Left ventricle myocardium inferior (tissue), 1 donor: ENCODE measurements at regions of chr4 and their contacts with region 1.

Region 1: GRCh38 chr4:177250056-177250696 is 59.5 kb upstream of the NEIL3 start:
- DNase-seq: peak; percentile 44
- H3K4me3 ChIP-seq: no peak overlapping the region
- H3K27ac ChIP-seq: no peak overlapping the region
- H3K4me1 ChIP-seq: no peaks in the 10 kb centered on the region
- H3K27me3 ChIP-seq: peaks cover 7% of the 10 kb centered on the region
- CTCF ChIP-seq: peak; percentile 88

Region 2: GRCh38 chr4:177315767-177316464 is 65.7 kb after region 1 on chr4:
- intact Hi-C with region 1: no loop called
- DNase-seq: no peak
- H3K4me3 ChIP-seq: no peak overlapping the region
- H3K27ac ChIP-seq: no peak overlapping the region
- H3K4me1 ChIP-seq: no peaks in the 10 kb centered on the region
- H3K27me3 ChIP-seq: no peaks in the 10 kb centered on the region
- CTCF ChIP-seq: no peak

Region 3: DNA sequence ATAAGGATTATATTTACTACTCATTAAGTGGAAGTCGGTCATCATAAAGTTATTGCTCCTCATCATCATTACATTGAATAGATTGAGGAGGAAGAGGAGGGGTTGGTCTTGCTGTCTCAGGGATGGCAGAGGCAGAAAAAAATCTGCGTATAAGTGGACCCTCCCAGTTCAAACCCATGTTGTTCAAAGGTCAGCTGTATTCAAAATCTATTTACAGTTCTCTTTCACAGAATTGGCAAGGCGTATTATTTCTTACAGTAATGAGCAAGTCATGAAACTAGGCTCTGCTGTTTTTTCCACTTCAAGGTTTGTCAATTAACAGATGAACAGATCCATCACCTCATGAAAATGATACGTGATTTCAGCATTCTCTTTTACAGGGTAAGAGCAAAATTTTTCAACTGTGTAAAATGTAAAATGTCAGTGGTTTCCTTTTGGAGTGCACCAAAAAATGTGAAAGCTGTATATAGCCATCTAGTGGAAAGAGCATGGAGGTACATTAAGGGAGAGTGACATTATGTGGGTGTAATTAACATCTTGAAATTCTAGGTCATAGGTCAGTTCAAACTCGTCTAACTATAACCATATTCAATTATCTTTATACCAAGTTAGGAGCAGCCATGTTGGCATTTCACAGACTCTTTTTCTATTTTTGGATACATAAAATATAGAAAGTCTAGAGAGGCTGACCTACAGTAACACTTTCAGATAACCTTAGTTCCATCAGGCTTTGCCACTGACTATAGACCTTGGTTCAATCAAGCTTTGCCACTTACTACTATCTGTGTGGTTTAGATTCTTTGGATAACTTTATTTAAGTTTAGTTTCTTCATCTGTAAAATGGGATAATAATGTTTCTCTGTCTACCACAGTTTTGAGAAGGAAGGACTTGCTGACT is 89.5 kb after region 1 on chr4:
- intact Hi-C with region 1: loop called (anchors 5 kb)
- DNase-seq: no peak
- H3K4me3 ChIP-seq: no peak overlapping the region
- H3K27ac ChIP-seq: no peak overlapping the region
- H3K4me1 ChIP-seq: peaks cover 6% of the 10 kb centered on the region
- H3K27me3 ChIP-seq: no peaks in the 10 kb centered on the region
- CTCF ChIP-seq: peak; percentile 71